Posterior vena cava (tissue), 2 donors: ENCODE measurements at regions of chr11 and their contacts with region 1.

Region 1: GRCh38 chr11:26649884-26650283 is 72.0 kb downstream of the SLC5A12 start:
- DNase-seq: no peak

Region 2: DNA sequence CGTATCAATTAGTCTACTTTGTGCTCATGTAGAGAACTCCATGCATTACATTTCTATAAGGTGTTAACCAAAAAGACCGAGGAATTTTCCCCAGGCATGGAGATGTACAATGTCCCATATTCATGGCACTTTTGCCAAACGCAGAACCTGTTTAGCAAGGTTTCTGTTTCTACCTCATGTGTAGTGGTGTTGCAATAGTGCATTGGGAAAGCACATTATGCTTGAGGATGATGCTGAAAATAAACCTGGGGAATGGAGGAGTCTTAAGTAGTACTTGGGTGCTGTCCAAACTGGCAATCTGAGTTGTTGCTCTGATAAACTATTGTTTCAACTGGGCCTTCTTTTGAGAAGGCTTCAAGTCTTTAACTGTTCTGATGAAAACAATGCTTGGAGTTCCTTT is 66.3 kb before region 1 on chr11:
- intact Hi-C with region 1: no loop called
- DNase-seq: no peak

Region 3: DNA sequence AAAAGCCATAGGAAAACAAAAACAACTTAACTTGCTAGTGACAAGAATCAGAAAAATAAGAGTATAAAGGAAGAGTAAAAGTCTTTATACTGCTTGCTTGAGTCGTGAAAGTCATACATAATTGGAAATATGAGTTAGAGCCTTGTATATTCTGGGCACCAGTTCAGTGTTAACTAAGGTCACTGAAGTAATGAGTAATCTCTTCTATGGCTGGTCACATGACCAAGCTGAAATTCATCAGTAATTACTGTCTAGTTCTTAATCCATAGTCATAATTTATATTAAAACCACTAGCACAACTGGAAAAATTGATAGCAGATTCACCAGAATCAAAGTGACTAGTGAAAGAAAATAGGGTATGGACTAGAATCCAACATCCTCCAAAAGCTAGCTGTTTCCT is 156.3 kb after region 1 on chr11:
- intact Hi-C with region 1: loop called in 1 of 2 experiments (anchors 10 kb)
- DNase-seq: no peak